Activated CD8-positive, alpha-beta memory T cell treated with anti-CD3 and anti-CD28 coated beads, Interleukin-2, amount 10 ng/mL, durations not matched to agents 7 days and 5 days (primary cell): ENCODE measurements at regions of chr2 and their contacts with region 1.

Region 1: DNA sequence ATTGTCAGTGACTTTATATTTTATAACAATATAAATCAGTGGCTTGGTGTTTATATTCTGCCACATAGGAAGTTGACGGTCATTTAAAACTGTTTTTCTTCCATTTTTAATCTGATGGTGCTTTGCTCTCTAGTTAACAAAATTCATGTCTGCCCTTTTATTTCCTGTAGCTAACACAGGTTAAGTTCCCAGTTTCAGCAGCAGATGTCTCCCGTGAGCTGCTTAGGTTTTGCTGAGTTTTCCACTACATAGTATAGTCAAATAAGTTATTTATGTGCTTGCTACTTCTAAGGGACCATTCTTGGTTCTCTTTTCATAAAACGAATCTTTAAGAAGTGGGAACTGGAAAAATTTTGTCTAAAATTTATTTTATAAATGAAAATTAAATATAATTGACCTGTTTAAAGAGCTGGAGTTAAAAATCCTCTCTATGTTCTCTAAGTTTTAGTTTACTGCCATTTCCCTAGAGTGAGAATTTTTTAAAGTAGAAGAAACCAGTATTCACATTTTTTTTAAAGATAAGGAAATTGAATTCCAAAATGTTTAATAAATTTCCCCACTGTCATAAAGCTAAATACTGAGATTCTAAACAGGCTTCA is 20.6 kb downstream of the HTR2B start:
- DNase-seq: peak; percentile 77
- ATAC-seq: peak; percentile 85
- H3K4me3 Mint-ChIP-seq: no peak overlapping the region
- H3K27ac Mint-ChIP-seq: no peak overlapping the region
- H3K4me1 Mint-ChIP-seq: peaks cover 4% of the 10 kb centered on the region
- H3K27me3 Mint-ChIP-seq: no peaks in the 10 kb centered on the region

Region 2: GRCh38 chr2:231132126-231132525 is 27.9 kb after region 1 on chr2:
- CTCF ChIA-PET with region 1: no interaction called
- DNase-seq: no peak
- ATAC-seq: no peak
- H3K4me3 Mint-ChIP-seq: no peak overlapping the region
- H3K27ac Mint-ChIP-seq: no peak overlapping the region
- H3K4me1 Mint-ChIP-seq: no peaks in the 10 kb centered on the region
- H3K27me3 Mint-ChIP-seq: no peaks in the 10 kb centered on the region

Region 3: DNA sequence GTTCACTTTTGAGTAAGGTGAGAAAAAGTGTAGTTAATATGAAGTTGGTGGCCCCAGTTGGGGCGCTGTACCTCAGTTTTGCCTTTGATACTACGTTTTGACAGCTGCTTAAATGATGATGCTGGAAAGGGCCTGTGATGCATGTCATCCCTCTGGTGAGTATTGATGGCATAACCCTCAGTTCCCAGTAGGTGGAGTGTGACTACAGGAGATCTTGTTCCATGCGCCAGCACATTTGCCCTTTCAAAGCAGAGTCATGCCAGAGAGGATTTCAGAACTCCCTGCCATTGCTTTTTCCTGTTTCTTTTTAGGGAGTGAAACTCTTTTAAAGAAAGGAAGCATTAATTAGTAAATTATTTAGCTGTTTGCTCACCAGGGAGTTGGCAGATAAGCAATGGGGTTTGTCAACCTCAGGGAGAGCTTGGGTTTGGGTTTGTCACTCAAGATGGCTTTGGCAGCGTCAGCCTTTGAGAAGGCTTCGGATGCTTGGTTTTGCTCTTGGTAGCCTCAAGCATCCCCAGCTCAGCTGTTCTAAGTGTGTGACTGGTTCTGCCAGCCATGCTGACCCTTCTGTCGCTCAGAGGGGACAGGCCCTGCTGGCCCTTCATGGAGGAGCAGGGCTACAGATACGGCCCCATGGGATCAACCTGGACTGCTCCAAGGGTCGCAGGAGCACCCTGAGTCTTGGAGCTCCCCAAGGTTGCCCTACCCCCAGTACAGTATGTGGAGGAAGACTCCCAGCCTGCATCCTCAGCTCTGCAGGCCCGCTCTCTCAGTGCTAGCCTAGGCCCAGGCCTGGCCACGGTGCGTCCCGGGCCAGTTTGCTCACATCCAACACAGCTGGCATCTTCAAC is 123.3 kb after region 1 on chr2:
- CTCF ChIA-PET with region 1: interaction called, 10 read pairs
- DNase-seq: peak; percentile 69
- ATAC-seq: peak; percentile 96
- H3K4me3 Mint-ChIP-seq: no peak overlapping the region
- H3K27ac Mint-ChIP-seq: no peak overlapping the region
- H3K4me1 Mint-ChIP-seq: no peaks in the 10 kb centered on the region
- H3K27me3 Mint-ChIP-seq: no peaks in the 10 kb centered on the region